ENCODE measurements at regions of chr4 and their contacts with region 1.

Region 1: GRCh38 chr4:81405894-81406401 is 65.8 kb downstream of the RASGEF1B start:
- DNase-seq: peak in 3 of 5 donors; percentile 40 to 94 (median 91)
- H3K4me3 ChIP-seq: peak overlapping the region in 2 of 3 donors; percentile 26 to 31
- H3K27ac ChIP-seq: no peak overlapping the region
- H3K4me1 ChIP-seq: no peaks in the 10 kb centered on the region
- H3K27me3 ChIP-seq: no peaks in the 10 kb centered on the region
- CTCF ChIP-seq: peak; percentile 78

Region 2: GRCh38 chr4:82201805-82202641 is 796.1 kb after region 1 on chr4:
- intact Hi-C with region 1: loop called (anchors 10 kb)
- DNase-seq: peak in 4 of 5 donors; percentile 44 to 73 (median 56)
- H3K4me3 ChIP-seq: no peak overlapping the region
- H3K27ac ChIP-seq: no peak overlapping the region
- H3K4me1 ChIP-seq: no peaks in the 10 kb centered on the region
- H3K27me3 ChIP-seq: no peaks in the 10 kb centered on the region
- CTCF ChIP-seq: peak; percentile 57